ENCODE measurements at regions of chr13 and their contacts with region 1.

Region 1: GRCh38 chr13:110715395-110716235 is 2.1 kb downstream of the ING1 start:
- DNase-seq: peak; percentile 97
- H3K4me3 Mint-ChIP-seq: peak overlapping the region; percentile 96
- H3K27ac Mint-ChIP-seq: peak overlapping the region; percentile 98
- H3K4me1 Mint-ChIP-seq: peaks cover 33% of the 10 kb centered on the region
- H3K27me3 Mint-ChIP-seq: no peaks in the 10 kb centered on the region

Region 2: GRCh38 chr13:110680851-110681250 is 34.8 kb before region 1 on chr13:
- CTCF ChIA-PET with region 1: interaction called, 9 read pairs
- POLR2A ChIA-PET with region 1: interaction called, 3 read pairs
- intact Hi-C with region 1: loop called (anchors 1 kb)
- DNase-seq: no peak
- H3K4me3 Mint-ChIP-seq: no peak overlapping the region
- H3K27ac Mint-ChIP-seq: no peak overlapping the region
- H3K4me1 Mint-ChIP-seq: peaks cover 17% of the 10 kb centered on the region
- H3K27me3 Mint-ChIP-seq: no peaks in the 10 kb centered on the region

Region 3: GRCh38 chr13:110915057-110915873 is 199.7 kb after region 1 on chr13 and contains the start of gene ANKRD10:
- CTCF ChIA-PET with region 1: interaction called, 4 read pairs
- POLR2A ChIA-PET with region 1: interaction called, 8 read pairs
- intact Hi-C with region 1: loop called (anchors 1 kb)
- DNase-seq: peak; percentile 98
- H3K4me3 Mint-ChIP-seq: peak within 1 kb of the TSS; percentile 87
- H3K27ac Mint-ChIP-seq: peak within 1 kb of the TSS; percentile 94
- H3K4me1 Mint-ChIP-seq: peaks cover 46% of the 10 kb centered on the region
- H3K27me3 Mint-ChIP-seq: no peaks in the 10 kb centered on the region
- total RNA-seq, gene ANKRD10: 83.9 to 97.8 TPM

Region 4: GRCh38 chr13:111153279-111153976 is 437.8 kb after region 1 on chr13:
- CTCF ChIA-PET with region 1: no interaction called
- POLR2A ChIA-PET with region 1: no interaction called
- intact Hi-C with region 1: loop called (anchors 5 kb)
- DNase-seq: peak; percentile 95
- H3K4me3 Mint-ChIP-seq: peak overlapping the region; percentile 87
- H3K27ac Mint-ChIP-seq: peak overlapping the region; percentile 89
- H3K4me1 Mint-ChIP-seq: peaks cover 28% of the 10 kb centered on the region
- H3K27me3 Mint-ChIP-seq: no peaks in the 10 kb centered on the region

Measured in activated CD4-positive, alpha-beta memory T cell treated with anti-CD3 and anti-CD28 coated beads for 36 hours (primary cell).